ENCODE measurements at regions of chr5 and their contacts with region 1.

Region 1: GRCh38 chr5:126536874-126537273 is 58.1 kb downstream of the ALDH7A1 start:
- DNase-seq: no peak
- ATAC-seq: no peak

Region 2: DNA sequence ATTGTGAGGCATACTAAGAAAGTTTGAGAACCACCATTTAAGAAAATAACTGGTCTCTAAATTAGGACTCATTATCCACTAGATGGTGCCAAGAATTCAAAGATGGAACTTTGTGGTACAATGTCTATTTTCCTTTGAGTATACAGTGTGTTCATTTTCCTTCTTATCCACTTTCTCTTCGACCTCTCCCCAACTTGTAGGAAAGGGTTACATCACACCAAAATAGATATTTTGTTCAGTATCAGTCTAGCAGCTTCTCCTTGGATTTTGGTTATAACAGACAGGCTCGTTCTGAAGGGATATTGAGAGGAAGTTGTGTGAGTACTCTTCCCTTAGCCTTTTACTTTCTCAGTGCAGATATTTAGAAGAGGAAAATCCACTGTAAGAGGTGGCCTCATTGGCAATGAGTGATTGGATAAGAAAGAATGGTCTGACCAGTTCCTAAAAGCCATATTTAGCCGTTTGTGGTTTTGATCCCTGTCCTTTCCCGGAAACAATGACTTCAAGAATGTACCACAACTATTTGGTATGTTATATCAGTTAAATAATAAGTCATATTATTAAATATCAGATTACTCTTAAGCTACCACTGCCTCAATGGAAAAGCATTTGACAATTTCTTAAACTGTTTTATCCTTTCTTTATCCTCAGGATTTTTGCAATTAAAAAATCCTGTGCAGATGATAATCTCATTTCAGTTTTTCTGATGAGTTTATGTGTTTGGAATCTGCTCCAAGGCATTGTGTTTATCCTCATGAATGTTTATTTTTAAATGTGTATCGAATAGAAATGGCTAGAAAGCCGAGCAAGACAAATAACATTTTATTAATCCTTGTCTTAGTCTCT is 182.6 kb before region 1 on chr5:
- intact Hi-C with region 1: loop called (anchors 5 kb)
- DNase-seq: no peak
- ATAC-seq: peak; percentile 90

Region 3: GRCh38 chr5:126462239-126463014 is 74.4 kb before region 1 on chr5:
- intact Hi-C with region 1: no loop called
- DNase-seq: no peak
- ATAC-seq: peak; percentile 45